ENCODE measurements at regions of chr5 and their contacts with region 1.

Region 1: DNA sequence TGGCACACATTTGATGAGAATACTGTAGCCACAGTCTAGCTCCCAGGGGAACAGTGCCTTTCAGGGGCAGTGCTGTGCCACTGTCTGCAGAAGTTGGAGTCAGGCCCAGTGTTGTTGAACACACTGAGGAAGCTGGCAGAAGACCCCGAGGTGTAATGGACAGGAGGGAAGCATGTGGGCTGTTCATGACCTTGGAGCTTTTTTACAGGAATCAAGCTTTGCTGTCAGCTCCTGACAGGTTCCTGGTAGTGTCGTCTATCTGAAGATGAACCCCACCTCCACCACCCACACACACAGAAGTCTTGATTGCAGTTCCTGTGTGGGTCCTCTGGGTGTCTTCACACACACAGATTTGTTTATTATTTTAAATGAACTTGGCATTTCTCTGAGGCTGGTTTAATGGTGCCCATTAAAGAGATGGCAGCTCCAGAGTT is 40.3 kb upstream of the TNFAIP8 start:
- DNase-seq: peak; percentile 81
- H3K4me3 ChIP-seq: peak overlapping the region; percentile 5
- H3K27ac ChIP-seq: peak overlapping the region; percentile 57
- H3K4me1 ChIP-seq: peaks cover 100% of the 10 kb centered on the region
- CTCF ChIP-seq: peak; percentile 84

Region 2: GRCh38 chr5:118987988-118988865 is 327.3 kb before region 1 on chr5 and contains the start of gene DTWD2:
- CTCF ChIA-PET with region 1: interaction called, 4 read pairs
- POLR2A ChIA-PET with region 1: interaction called, 5 read pairs
- intact Hi-C with region 1: loop called (anchors 1 kb)
- DNase-seq: peak; percentile 96
- H3K4me3 ChIP-seq: peak within 1 kb of the TSS; percentile 75
- H3K27ac ChIP-seq: peak within 1 kb of the TSS; percentile 77
- H3K4me1 ChIP-seq: peaks cover 33% of the 10 kb centered on the region
- CTCF ChIP-seq: peak; percentile 98
- total RNA-seq, gene DTWD2: 4.2 and 8.6 TPM in 2 replicates

Region 3: DNA sequence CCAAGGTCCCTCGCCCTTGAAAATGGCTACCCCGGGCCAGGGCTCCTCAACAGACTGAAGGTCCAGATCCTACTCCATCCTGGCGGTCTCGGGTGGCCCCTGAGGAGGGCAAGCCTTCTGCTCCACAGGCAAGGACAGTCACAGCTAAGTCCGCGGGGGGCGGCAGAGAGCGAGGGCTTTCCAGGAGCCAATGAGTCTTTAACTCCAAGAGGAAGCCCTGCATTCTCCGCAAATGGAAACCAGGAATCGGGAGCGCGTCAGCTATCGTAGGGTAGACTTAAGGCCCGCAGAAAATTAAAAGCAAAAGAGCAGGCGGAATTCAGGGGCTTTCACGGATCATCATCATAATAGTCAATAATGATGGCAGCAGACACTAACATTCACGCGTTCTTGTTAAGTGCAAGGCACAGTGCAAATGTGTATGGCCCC is 47.6 kb before region 1 on chr5:
- CTCF ChIA-PET with region 1: interaction called, 3 read pairs
- POLR2A ChIA-PET with region 1: interaction called, 22 read pairs
- intact Hi-C with region 1: no loop called
- DNase-seq: peak; percentile 84
- H3K4me3 ChIP-seq: peak overlapping the region; percentile 84
- H3K27ac ChIP-seq: peak overlapping the region; percentile 60
- H3K4me1 ChIP-seq: peaks cover 45% of the 10 kb centered on the region
- CTCF ChIP-seq: 0 out of 2 replicates have a peak, but pooled peaks have one; percentile 34

Region 4: GRCh38 chr5:119290161-119290569 is 25.4 kb before region 1 on chr5:
- CTCF ChIA-PET with region 1: no interaction called
- POLR2A ChIA-PET with region 1: interaction called, 12 read pairs
- intact Hi-C with region 1: no loop called
- DNase-seq: peak; percentile 90
- H3K4me3 ChIP-seq: peak overlapping the region; percentile 19
- H3K27ac ChIP-seq: peak overlapping the region; percentile 1
- H3K4me1 ChIP-seq: peaks cover 74% of the 10 kb centered on the region
- CTCF ChIP-seq: no peak

Region 5: DNA sequence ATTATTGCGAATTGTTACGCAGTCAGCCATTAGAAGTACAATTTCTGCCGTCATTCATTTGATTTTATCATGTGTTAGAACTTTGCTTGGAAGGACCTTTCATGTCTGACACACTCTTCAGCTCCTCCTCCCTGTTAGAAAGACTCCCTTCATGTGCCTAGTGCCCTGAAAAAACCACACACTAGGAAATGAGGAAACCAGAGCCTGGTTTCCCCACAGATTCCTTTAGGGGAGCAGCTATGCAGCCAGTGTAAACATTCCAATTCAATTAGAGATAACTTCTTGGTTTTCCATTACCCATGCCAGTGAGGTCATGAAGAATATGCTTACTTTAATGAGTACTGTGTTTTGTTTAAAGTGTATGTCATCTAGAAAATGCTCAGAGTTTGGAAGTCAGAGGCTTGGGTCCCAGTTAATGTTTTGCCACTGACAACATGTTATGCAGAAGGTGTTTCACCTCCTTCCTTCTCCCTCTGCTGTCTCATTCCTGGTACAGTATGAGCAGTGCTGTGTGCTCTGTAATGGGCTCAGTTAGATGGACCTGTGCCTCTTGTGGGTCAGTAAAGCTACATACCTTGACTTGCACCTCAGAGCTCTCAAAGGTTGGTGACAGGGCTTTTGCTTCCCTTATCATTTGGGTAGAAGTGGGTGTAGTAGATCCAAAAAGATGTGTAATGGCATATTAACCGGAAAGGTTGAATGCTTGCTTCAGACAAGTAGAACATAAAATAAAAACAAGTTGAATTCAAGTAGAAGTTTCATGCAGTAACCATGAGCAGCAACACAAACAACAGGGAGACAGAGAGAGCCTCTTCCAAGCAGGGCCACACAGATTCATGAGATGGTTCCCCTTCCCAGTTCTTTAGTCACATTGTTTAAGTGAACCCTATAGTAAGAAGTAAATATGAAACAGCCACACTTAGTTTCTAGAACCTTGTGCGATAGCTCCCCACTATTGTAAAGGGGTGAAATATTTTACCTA is 12.3 kb before region 1 on chr5:
- CTCF ChIA-PET with region 1: no interaction called
- POLR2A ChIA-PET with region 1: interaction called, 12 read pairs
- intact Hi-C with region 1: no loop called
- DNase-seq: no peak
- H3K4me3 ChIP-seq: no peak overlapping the region
- H3K27ac ChIP-seq: no peak overlapping the region
- H3K4me1 ChIP-seq: peaks cover 60% of the 10 kb centered on the region
- CTCF ChIP-seq: no peak

Region 6: DNA sequence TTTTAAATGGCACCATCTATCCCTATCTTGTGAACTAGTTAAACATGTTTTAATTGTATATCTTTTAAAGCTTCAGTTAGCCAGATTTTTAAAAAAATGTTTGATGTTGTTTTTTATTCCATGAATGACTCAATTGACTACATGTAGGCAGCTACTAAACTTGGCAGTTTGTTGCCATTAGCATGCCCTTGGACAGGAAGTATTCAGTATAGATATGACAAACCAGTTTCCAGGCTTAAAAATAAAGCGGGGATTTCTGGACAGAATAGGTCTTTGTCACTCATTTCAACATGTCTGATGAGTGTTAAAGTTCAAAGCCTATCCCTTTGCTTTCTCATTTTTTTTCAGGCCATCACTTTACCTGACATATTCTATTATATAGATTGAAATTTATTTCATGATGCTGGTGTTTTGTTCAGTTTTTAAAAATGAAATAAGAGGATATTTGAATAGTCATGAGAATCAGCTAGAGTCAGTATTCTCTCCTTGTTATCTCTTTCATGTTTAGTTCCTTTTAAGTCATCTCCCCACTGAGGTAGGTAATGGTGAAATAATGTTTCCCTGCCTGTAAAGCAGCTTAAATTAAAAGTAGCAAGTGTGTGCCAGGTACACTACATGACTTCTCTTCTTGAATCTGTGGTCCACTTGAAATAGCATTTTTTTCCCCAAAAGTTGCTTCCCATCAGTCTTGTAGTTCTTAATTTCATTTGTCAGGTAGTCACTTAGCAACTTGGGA is 52.1 kb after region 1 on chr5:
- CTCF ChIA-PET with region 1: no interaction called
- POLR2A ChIA-PET with region 1: interaction called, 11 read pairs
- intact Hi-C with region 1: no loop called
- DNase-seq: no peak
- H3K4me3 ChIP-seq: peak overlapping the region; percentile 14
- H3K27ac ChIP-seq: no peak overlapping the region
- H3K4me1 ChIP-seq: peaks cover 44% of the 10 kb centered on the region
- CTCF ChIP-seq: no peak

Measured in OCI-LY7 (cell line).